Activated T-helper 2 cell treated with anti-CD3 and anti-CD28 coated beads, Interferon-gamma antibody, Interleukin-2, Interleukin-4, amounts not matched to agents 10 μg/mL and 5 μg/mL and 100 μg/mL, durations not matched to agents 14 hours and 24 hours and 36 hours (primary cell): ENCODE measurements at regions of chr19 and their contacts with region 1.

Region 1: DNA sequence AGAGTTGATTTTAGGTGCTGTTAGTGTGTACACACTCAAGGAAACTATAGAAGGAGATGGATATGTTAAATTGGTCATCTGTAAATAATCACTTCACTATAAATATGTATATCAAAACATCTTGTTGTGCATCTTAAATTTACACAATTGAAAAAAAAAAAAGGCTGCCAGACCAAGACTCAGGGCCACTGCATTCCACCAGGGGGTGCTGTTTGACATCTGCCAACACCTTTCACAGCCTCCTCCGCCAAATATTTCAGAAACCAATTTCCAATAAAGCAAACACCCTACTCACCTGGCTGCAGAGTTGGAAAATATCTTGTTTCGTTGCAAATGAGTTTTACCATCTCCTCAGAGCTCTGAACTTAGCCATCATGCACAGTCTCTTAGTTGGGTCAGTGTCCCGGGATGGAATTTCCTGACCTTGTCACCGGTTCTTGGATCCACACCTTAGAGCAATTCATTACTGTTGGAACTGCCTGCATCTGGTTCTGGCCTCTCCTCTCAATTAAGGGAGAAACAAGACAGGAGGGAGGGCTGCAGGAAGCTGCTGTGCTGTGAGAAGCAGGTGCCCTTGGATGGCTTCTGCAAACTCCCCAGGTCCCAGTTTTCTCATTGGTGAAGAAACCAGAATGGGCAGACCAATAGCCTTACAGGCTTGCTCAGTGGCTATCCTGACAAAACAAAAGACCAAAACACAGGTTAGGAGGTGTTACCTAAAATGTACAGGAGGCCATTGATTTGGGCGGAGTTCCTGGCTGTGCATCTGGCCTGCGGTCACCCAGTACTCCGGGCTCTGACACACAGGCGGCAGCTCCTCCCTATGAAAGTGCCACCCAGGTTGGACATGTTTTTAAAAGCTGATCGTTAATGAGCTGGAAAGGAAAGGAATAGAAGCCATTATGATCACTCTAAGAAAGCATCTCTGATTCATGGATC is 746.6 kb downstream of the UQCRFS1 start:
- DNase-seq: peak; percentile 48
- H3K4me3 Mint-ChIP-seq: no peak overlapping the region
- H3K27ac Mint-ChIP-seq: no peak overlapping the region
- H3K4me1 Mint-ChIP-seq: peaks cover 6% of the 10 kb centered on the region
- H3K27me3 Mint-ChIP-seq: no peaks in the 10 kb centered on the region

Region 2: GRCh38 chr19:28633319-28634018 is 167.1 kb after region 1 on chr19:
- intact Hi-C with region 1: loop called (anchors 1 kb)
- DNase-seq: peak; percentile 19
- H3K4me3 Mint-ChIP-seq: no peak overlapping the region
- H3K27ac Mint-ChIP-seq: no peak overlapping the region
- H3K4me1 Mint-ChIP-seq: no peaks in the 10 kb centered on the region
- H3K27me3 Mint-ChIP-seq: no peaks in the 10 kb centered on the region

Region 3: DNA sequence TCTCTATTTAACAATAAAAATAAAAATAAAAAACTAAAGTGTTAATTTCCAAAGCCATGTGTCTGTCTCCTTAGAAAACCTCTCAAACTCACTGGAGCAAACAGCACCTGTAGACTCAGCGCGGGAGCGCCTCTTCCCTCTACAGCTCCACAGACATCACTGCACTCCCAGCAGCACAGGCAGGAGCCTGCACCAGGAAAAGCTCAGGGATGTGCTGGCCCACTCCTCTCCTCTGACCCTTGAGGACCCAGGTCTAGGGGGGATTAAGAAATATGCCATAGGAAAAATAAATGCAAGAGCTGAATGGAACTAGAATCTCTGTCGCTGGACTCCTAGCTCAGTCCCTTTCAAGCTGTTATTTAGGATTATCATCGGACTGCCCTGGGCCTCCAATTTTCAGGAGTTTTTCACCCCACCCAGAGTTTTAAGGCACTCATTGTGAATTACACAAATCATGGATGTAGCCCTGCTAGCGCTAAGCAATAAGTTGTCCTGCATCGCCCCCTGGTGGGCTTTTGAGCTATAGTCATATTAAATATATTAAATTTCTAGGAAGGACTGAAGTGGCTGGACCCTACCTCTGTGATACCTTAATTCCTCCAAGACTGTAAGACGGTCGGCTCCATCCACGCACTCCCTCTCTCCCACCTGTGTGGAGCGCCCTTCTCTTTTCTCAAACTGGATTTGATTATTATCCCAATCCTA is 412.6 kb after region 1 on chr19:
- intact Hi-C with region 1: loop called (anchors 5 kb)
- DNase-seq: peak; percentile 19
- H3K4me3 Mint-ChIP-seq: no peak overlapping the region
- H3K27ac Mint-ChIP-seq: no peak overlapping the region
- H3K4me1 Mint-ChIP-seq: no peaks in the 10 kb centered on the region
- H3K27me3 Mint-ChIP-seq: peaks cover 2% of the 10 kb centered on the region